Left cardiac atrium (tissue), 4 donors: ENCODE measurements at regions of chr4 and their contacts with region 1.

Region 1: GRCh38 chr4:4488405-4489404 is 53.1 kb downstream of the STX18 start:
- DNase-seq: peak; percentile 61
- ATAC-seq: peak; percentile 81 to 93

Region 2: GRCh38 chr4:4869731-4870571 is 381.2 kb after region 1 on chr4:
- intact Hi-C with region 1: loop called in 1 of 2 experiments (anchors 10 kb)
- DNase-seq: no peak
- ATAC-seq: no peak

Region 3: GRCh38 chr4:4880492-4880891 is 391.8 kb after region 1 on chr4:
- intact Hi-C with region 1: loop called (anchors 10 kb)
- DNase-seq: no peak
- ATAC-seq: no peak

Region 4: DNA sequence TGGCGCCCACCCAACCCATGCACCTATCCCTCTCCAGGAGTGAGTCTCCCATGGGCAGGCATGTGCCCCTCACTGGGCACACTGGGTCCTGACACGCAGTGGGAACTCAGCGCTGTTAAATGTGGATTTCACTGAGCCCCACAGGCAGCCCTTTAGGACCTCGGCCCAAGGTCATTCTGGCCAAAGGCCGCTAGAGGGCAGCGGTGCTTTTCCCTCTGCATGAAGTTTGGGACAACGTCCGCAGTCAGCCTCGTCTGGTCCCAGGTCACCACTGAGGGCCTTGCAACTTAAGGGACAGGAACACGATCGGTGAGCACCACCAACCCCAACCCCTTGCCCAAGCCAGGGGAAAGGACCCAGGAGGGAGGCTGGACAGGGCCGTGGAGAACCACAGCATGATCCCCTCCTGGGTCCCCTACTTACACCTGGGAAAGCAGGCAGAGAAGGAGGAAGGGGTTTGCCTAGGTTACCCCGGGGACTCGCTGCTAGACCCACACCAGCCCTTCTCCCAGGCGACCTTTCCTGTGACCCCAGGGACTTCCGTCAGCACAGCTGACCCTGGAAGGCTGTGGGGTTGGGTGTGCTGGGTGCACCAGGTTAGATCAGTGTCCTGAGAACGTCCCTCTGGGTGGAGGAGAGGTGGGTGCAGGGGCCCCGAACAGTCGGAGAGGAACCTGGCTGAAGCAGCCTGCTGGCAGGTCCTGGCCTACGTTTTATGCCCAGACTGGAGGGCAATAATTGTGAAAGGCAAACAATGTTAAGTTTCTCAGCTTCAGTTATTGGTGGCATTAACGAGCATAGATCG is 506.6 kb after region 1 on chr4:
- intact Hi-C with region 1: loop called in 1 of 2 experiments (anchors 5 kb)
- DNase-seq: peak; percentile 80
- ATAC-seq: peak; percentile 19 to 67

Region 5: DNA sequence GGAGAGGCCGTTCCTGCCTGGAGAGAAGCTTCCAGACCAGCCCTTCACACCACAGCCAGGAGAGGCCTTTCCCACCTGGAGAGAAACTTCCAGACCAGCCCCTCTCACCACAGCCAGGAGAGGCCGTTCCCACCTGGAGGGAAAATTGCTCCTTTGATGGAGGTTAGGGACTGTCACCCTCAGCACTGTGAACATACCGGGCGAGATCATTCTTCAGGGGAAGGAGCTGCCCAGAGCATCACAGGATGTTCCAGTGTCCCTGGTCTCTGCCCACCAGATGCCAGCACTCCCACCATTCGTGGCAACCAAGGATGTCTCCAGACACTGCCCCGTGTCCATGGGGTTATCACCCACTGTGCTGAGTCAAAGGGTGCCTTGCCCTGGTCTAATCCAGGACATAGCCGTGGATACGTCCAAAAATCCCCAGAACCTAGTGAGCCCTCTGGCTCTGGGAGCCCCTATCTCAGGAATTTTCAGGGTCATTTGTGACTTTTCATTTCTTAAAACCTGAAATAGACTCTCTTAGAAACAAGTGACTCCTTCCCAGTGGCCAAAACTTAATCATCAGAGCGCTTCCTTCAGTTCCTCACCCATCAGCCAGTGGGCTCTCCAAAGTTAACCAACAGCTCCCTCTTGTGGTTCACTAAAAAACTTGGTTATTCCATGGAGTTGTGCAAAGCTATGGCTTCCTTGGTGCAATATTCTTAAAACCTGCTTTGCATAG is 1324.0 kb after region 1 on chr4:
- intact Hi-C with region 1: loop called in 1 of 2 experiments (anchors 10 kb)
- DNase-seq: no peak
- ATAC-seq: peak; percentile 68 to 81